Activated CD4-positive, alpha-beta T cell treated with anti-CD3 and anti-CD28 coated beads for 36 hours (primary cell): ENCODE measurements at regions of chr13 and their contacts with region 1.

Region 1: DNA sequence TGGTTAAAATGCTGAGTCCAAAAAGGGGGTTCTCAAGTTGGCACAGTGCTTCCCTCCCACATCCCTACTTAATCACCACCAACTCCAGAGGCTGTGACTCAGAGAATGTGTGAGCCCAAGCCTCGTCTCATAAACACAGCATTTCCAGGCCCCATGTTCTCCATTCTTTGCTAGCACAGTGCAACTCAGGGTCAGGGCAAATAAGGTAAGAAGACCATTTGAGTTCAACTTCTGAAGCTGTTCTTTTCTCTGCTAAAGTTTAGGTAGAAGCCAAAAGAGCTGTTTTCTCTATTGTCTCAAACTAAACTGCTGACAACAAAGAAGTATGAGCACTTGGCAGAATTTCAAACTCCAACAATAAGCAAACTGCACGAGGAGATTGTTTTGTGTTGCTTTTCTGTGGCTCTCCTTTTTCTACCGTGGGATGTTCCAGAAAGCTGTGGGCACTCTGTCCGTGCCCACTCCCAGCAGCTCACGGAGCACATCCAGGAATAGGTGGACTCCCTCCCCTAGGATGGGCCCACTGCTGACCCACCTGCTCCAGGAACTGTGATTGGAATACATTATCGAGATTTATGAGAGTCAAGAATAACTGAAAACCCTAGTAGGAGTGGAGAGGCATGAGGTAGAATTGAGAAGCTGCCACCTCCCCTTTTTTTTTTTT is 494.3 kb downstream of the COG6 start:
- DNase-seq: peak; percentile 33
- ATAC-seq: peak; percentile 9
- H3K4me3 Mint-ChIP-seq: no peak overlapping the region
- H3K27ac Mint-ChIP-seq: peak overlapping the region; percentile 66
- H3K4me1 Mint-ChIP-seq: peaks cover 72% of the 10 kb centered on the region
- H3K27me3 Mint-ChIP-seq: no peaks in the 10 kb centered on the region

Region 2: GRCh38 chr13:40069173-40070044 is 80.3 kb before region 1 on chr13:
- CTCF ChIA-PET with region 1: interaction called, 4 read pairs
- POLR2A ChIA-PET with region 1: no interaction called
- intact Hi-C with region 1: loop called (anchors 2 to 5 kb)
- DNase-seq: peak; percentile 86
- ATAC-seq: peak; percentile 93
- H3K4me3 Mint-ChIP-seq: peak overlapping the region; percentile 26
- H3K27ac Mint-ChIP-seq: peak overlapping the region; percentile 80
- H3K4me1 Mint-ChIP-seq: peaks cover 31% of the 10 kb centered on the region
- H3K27me3 Mint-ChIP-seq: no peaks in the 10 kb centered on the region

Region 3: GRCh38 chr13:40109356-40109844 is 40.3 kb before region 1 on chr13:
- CTCF ChIA-PET with region 1: interaction called, 5 read pairs
- POLR2A ChIA-PET with region 1: no interaction called
- intact Hi-C with region 1: loop called in 1 of 2 experiments (anchors 1 kb)
- DNase-seq: peak; percentile 45
- ATAC-seq: peak; percentile 94
- H3K4me3 Mint-ChIP-seq: no peak overlapping the region
- H3K27ac Mint-ChIP-seq: peak overlapping the region; percentile 44
- H3K4me1 Mint-ChIP-seq: peaks cover 37% of the 10 kb centered on the region
- H3K27me3 Mint-ChIP-seq: no peaks in the 10 kb centered on the region

Region 4: DNA sequence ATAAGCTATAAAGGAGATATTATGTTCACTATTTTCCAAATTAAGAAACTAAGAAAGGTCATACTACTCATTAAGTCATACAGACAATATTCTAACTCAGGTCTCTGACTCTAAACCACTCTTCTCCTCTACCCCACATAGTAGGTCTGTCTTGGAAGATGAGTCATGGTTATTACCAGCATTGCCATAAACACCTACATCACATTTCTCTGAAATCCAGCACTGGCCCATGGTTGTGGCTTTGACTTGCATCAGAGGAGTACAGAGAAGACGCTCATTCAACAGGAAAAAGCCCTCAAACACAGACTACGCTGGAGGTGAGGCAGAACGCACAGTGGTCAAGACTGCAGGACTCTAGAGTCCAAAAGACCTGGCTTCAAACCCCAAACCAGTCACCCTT is 17.5 kb before region 1 on chr13:
- CTCF ChIA-PET with region 1: interaction called, 3 read pairs
- POLR2A ChIA-PET with region 1: no interaction called
- intact Hi-C with region 1: loop called in 1 of 2 experiments (anchors 1 kb)
- DNase-seq: peak; percentile 77
- ATAC-seq: peak; percentile 85
- H3K4me3 Mint-ChIP-seq: no peak overlapping the region
- H3K27ac Mint-ChIP-seq: peak overlapping the region; percentile 72
- H3K4me1 Mint-ChIP-seq: peaks cover 37% of the 10 kb centered on the region
- H3K27me3 Mint-ChIP-seq: no peaks in the 10 kb centered on the region

Region 5: DNA sequence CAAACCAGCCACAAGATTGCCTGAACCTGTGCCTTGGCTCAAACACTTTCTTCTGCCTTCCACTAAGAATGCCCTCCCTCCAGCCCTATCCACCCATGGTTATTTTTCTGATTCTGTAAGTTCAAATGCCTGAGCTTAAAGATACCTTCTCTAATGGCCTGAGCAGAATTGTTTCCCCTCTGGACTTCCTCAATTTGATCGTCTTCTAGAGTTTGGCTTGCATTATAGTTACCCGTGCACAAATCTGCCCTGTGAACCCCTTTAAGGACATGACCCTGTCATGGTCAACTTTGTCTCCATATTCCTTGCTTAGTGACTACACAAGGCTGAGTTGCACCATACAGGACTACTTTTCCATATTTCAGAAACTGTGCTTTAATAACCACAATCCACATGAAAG is 35.7 kb after region 1 on chr13:
- CTCF ChIA-PET with region 1: interaction called, 4 read pairs
- POLR2A ChIA-PET with region 1: no interaction called
- intact Hi-C with region 1: loop called (anchors 2 to 5 kb)
- DNase-seq: no peak
- ATAC-seq: no peak
- H3K4me3 Mint-ChIP-seq: no peak overlapping the region
- H3K27ac Mint-ChIP-seq: no peak overlapping the region
- H3K4me1 Mint-ChIP-seq: peaks cover 72% of the 10 kb centered on the region
- H3K27me3 Mint-ChIP-seq: no peaks in the 10 kb centered on the region

Region 6: GRCh38 chr13:40190641-40191100 is 40.9 kb after region 1 on chr13:
- CTCF ChIA-PET with region 1: interaction called, 4 read pairs
- POLR2A ChIA-PET with region 1: no interaction called
- intact Hi-C with region 1: loop called (anchors 2 to 5 kb)
- DNase-seq: peak; percentile 81
- ATAC-seq: peak; percentile 43
- H3K4me3 Mint-ChIP-seq: peak overlapping the region; percentile 32
- H3K27ac Mint-ChIP-seq: peak overlapping the region; percentile 89
- H3K4me1 Mint-ChIP-seq: peaks cover 76% of the 10 kb centered on the region
- H3K27me3 Mint-ChIP-seq: no peaks in the 10 kb centered on the region

Region 7: DNA sequence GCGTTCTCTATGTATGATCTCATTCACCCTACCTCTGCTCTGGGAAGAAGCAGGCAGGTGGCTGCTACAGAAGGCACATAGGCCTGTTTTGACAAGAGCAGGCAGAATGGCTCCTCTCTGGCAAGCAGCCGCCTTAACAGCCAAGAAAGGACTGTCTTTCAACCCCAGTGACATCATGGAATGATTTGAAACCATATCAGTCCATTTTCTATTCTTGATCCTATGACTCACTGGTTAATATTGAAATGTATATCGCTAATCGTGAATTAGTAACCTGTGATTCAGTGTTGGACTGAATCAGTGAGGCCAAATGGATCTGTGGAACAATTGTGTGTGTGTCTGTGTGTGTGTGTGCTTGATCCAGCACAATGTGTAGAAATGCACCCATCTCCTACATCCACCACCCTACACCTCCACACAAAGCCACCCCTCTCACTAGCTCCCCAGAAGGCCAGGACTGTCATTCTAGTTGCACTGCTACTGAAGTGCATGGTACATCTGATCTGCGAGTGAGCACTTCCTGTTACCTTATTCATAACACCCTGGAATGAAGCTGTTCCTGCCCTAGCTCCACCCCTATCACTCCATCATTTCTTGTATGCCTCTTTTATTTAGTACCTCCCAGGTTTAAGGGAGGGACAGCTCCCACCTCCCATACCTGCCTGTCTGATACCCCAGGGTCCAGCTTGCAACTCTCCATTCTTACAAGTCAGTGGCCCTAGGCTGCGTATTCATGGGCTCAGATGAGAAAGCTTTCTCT is 56.7 kb after region 1 on chr13:
- CTCF ChIA-PET with region 1: no interaction called
- POLR2A ChIA-PET with region 1: no interaction called
- intact Hi-C with region 1: loop called in 1 of 2 experiments (anchors 2 kb)
- DNase-seq: peak; percentile 68
- ATAC-seq: peak; percentile 89
- H3K4me3 Mint-ChIP-seq: peak overlapping the region; percentile 58
- H3K27ac Mint-ChIP-seq: peak overlapping the region; percentile 99
- H3K4me1 Mint-ChIP-seq: peaks cover 64% of the 10 kb centered on the region
- H3K27me3 Mint-ChIP-seq: no peaks in the 10 kb centered on the region

Region 8: DNA sequence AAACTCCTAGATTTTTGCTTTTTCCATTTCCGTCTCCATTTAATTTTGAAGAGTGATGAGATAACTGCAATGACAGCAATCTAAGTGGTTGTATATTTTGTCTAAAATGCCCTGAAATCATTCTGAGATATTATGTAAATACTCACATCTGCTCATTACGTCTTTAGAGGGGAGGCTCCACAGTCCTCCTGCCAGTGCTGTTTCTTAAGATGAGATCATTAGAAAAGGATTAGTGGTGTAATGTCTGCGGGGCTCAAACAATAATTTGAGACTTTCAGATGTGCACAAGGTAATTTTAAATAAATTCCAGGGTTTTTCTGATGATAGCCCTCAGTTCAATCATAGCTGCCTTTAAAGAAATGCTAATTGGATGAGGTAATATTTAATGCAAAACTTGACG is 78.8 kb after region 1 on chr13:
- CTCF ChIA-PET with region 1: no interaction called
- POLR2A ChIA-PET with region 1: no interaction called
- intact Hi-C with region 1: no loop called
- DNase-seq: no peak
- ATAC-seq: no peak
- H3K4me3 Mint-ChIP-seq: no peak overlapping the region
- H3K27ac Mint-ChIP-seq: no peak overlapping the region
- H3K4me1 Mint-ChIP-seq: peaks cover 24% of the 10 kb centered on the region
- H3K27me3 Mint-ChIP-seq: no peaks in the 10 kb centered on the region

Region 9: DNA sequence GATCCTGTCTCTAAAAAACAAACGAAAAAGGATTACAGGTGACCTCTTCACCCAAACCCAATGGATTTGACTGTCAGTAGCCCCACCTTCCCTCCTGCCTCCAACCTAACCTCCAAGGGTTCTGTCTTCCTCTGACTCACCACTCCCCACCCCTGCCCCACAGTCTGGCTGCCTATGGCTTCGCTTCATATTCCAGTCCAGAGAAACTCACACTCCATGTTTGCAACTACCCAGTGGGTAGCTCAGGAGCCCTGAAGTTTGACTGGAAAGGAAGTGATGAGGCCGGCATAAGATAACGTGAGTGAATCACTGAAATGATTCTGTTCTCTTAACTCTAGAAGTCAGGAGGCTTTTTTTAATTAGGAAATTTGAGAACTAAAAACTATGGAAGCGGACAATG is 212.8 kb after region 1 on chr13:
- CTCF ChIA-PET with region 1: no interaction called
- POLR2A ChIA-PET with region 1: no interaction called
- intact Hi-C with region 1: no loop called
- DNase-seq: no peak
- ATAC-seq: peak; percentile 39
- H3K4me3 Mint-ChIP-seq: no peak overlapping the region
- H3K27ac Mint-ChIP-seq: no peak overlapping the region
- H3K4me1 Mint-ChIP-seq: peaks cover 23% of the 10 kb centered on the region
- H3K27me3 Mint-ChIP-seq: no peaks in the 10 kb centered on the region